ENCODE measurements at regions of chrX and their contacts with region 1.

Region 1: DNA sequence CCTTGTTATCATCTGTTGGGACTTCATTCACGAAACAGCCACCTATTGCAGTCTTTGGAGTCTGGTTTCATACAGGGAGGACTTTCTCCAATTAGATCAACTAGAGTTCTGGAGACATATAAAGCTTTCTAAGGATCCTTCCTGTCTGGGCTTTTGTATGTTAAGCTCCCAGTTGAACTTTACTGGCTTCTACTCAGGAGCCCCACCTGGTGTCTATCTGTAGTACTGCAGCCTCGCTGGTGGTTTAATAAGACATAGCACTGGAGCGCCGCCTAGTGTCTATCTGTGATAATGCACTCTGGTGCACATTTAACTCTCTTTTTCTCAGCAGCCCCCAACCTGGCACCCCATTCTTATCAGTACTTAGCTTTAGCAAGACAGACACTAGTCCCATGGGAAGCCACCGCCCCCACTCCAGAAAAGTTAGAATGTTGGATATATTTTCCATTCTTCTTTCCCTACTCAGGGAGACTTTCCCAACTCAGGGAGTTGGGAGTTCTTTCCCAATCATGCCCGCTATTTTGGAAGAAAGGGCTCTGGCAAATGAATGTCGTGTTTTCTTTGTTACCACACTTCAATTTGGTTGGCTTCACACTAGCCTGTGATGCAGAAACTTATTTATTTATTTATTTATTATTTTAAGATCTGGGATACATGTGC is 36.9 kb upstream of the SYTL4 start:
- DNase-seq: no peak
- H3K4me3 ChIP-seq: no peak overlapping the region
- H3K27me3 ChIP-seq: no peaks in the 10 kb centered on the region
- CTCF ChIP-seq: peak; percentile 94

Region 2: GRCh38 chrX:100512471-100512870 is 256.3 kb before region 1 on chrX:
- CTCF ChIA-PET with region 1: interaction called, 14 read pairs
- POLR2A ChIA-PET with region 1: no interaction called
- DNase-seq: no peak
- H3K4me3 ChIP-seq: no peak overlapping the region
- H3K27me3 ChIP-seq: no peaks in the 10 kb centered on the region
- CTCF ChIP-seq: peak; percentile 37

Region 3: DNA sequence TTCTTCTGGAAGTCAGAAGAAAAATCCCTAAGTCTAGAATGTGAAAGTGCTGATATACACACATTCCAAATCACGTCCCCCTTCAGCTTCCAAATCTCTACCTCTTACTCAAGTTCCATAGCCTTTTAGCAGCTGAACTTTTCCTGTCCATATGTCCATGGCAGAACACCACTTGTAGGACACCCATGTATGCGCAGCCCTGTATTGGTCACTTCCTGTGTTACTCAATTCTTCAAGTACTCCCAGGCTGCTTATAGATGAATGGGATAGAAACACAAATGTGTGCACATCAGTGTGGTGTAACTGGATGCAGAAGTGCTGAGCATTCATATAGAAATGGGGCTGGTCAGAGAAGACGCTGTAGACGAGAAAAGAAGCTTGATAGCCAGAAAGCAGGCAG is 106.0 kb before region 1 on chrX:
- CTCF ChIA-PET with region 1: interaction called, 10 read pairs
- POLR2A ChIA-PET with region 1: no interaction called
- DNase-seq: no peak
- H3K4me3 ChIP-seq: no peak overlapping the region
- H3K27me3 ChIP-seq: no peaks in the 10 kb centered on the region
- CTCF ChIP-seq: no peak

Region 4: DNA sequence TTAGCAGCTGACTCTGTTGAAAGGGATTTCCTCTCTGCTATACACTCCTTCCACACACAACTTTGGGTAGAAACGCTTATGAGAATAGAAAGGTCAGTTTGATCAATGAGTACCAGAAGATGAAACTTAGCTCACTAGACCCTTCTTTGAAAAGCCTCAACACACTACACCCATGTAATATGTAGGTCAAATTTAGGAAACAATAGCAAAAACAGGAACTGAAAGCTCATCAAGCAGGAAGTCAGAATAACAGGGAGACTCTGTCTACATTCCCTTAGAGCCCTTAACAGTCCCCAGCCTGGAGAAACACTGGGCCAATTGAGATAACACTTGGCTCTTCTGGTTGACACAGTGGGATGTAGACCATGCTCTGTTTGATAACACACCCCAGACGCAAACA is 94.1 kb before region 1 on chrX:
- CTCF ChIA-PET with region 1: interaction called, 92 read pairs
- POLR2A ChIA-PET with region 1: no interaction called
- DNase-seq: no peak
- H3K4me3 ChIP-seq: no peak overlapping the region
- H3K27me3 ChIP-seq: no peaks in the 10 kb centered on the region
- CTCF ChIP-seq: no peak

Region 5: DNA sequence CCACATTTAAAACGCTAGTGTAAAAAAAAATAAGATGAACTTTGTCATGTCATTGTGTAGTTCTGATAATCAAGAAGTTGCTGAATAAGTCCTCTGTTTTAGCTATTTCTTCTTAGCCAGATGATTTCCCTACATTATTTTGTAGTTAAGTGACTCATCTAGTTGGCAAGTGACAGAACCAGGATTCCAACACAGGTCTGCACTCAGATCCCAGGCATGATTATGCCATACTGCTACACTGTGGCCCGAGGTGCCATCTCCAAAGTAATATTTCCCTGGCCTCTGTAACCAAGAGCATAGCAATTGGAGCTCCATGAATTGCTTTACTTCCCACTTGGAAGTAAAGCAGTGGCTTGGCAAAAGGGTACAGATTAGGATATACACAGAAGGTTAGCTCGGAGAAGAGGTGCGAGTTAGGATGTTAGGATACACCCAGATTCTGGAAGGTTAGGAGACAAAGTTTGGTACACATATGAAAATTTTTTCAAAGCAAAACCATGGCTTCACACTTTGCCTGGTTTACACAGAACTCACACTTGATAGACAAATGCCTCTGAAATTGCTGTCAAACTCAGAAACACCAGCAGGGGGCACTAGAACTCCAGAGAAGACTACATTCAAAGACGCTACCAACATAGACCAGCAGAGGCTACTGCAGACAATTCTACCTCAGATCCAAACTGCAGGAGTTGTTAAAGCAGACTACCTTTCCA is 83.4 kb before region 1 on chrX:
- CTCF ChIA-PET with region 1: interaction called, 78 read pairs
- POLR2A ChIA-PET with region 1: no interaction called
- DNase-seq: no peak
- H3K4me3 ChIP-seq: no peak overlapping the region
- H3K27me3 ChIP-seq: no peaks in the 10 kb centered on the region
- CTCF ChIP-seq: peak; percentile 72

Region 6: DNA sequence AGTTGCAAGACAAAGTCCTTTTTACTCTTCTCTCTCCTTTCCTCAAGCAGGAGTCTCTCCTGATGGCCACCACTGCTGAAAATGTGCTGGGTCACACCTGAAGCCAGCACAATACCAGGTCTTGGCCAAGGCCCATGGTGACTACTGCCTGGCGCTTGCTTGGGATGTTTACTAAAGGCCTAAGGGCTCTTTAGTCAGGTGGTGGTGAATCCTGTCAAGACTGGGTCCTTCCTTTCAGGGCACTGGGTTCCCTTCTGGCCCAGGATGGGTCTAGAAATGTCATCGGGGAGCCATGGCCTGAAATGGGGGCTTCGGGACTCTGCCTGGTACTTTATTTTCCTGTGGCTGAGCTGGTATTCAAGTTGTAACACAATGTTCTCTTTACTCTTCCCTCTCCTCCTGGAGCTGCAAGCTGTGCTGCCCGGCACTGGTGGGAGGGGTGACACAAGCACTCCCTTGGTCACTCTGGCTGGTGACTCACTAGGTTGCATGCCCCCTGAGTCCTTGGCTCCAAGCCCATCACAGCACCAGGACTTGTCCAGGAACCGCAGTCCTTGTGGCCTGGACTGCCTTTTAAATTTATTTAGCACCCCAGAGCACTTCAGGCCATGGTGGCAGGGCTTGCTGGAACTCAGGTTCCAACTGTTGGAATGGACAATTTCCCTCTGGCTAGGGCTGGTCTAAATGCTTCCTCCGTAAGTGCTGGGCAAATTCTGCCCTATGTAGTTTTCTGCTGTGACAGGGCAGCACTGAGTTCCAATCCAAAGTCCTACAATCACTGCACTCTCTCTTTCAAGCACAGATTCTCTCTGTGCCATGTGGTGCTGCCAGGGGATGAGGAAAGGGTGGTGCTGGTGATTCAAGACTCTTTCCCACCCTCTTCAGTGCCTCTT is 212.0 kb after region 1 on chrX:
- CTCF ChIA-PET with region 1: no interaction called
- POLR2A ChIA-PET with region 1: no interaction called
- DNase-seq: no peak
- H3K4me3 ChIP-seq: no peak overlapping the region
- H3K27me3 ChIP-seq: no peaks in the 10 kb centered on the region
- CTCF ChIP-seq: no peak

Region 7: DNA sequence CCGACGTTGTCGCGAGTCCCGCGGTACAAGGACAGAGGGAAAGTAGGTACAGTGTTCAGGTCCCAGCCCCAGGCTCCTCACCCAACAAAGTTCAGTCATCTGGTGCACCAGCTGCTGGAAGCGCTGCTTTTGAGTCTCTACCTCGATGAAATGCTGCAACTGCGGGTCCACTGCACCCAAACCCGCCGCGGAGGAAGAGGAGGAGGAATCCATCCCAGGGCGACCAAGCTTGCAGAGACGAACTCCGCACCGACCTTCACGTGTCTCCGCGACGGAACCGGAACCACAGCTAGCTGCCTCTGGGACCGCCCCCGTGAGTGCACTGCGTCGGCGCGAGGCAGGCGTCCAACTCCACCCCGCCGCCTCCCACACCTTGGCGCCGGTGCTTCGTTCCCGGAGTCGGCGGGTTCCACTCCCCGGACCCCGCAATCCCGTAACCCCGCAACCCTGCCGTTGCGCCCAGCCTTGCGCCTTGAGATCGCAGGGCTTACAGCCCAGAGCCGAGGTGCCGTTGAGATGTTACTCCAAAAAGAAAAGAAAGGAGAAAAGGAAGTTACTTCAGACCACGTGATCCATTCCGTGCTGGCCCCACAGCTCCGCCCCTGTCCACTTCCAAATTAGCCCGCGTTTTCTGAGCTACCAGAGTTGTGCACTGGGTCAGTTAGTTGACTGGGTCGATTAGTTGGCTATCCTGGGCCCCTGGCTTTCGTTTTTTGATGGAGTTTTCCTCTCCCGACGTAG is 579.8 kb after region 1 on chrX and contains the start of gene TIMM8A:
- CTCF ChIA-PET with region 1: no interaction called
- POLR2A ChIA-PET with region 1: no interaction called
- DNase-seq: peak; percentile 6
- H3K4me3 ChIP-seq: peak within 1 kb of the TSS; percentile 78
- H3K27me3 ChIP-seq: no peaks in the 10 kb centered on the region
- CTCF ChIP-seq: no peak
- polyA plus RNA-seq, gene TIMM8A: 5.9 and 6.4 TPM in 2 replicates